ENCODE measurements at regions of chr3 and their contacts with region 1.

Region 1: DNA sequence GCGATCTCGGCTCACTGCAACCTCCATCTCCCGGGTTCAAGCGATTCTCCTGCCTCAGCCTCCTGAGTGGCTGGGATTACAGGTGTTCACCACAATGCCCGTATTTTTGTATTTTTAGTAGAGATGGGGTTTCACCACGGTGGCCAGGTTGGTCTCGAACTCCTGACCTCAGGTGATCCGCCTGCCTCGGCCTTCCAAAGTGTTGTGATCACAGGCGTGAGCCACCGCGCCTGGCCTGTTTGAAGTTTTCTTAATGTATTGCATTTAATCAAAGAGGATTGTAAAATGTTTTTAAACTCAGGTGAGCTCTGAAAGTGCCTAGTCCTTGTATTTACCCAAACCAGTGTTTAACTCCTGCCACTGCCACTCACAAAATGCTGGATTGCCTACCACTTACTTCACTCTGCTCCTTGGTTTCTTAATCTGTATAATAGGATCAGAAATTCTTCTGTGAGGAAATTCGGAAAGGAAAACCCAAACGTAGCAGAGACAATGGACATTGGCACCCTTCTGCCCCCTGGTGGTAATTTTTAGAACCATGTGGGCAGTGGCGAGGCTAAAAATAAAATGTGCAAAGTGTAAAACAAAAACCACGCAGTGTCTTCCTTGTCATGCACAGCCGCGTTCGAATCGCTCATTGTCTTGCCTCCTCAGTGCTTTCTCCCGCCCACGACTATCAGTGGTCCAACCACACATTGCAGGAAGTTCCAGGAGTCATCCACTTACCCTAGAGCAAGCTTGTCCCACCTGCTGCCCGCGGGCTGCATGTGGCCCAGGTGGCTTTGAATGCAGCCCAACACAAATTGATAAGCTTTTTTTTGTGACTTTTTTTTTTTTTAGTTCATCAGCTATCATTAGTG is 27.3 kb downstream of the CEP19 start:
- DNase-seq: peak; percentile 73
- H3K4me3 ChIP-seq: no peak overlapping the region
- H3K27ac ChIP-seq: no peak overlapping the region
- H3K4me1 ChIP-seq: peaks cover 5% of the 10 kb centered on the region
- H3K27me3 ChIP-seq: no peaks in the 10 kb centered on the region
- CTCF ChIP-seq: peak; percentile 92 to 94 (median 93)
- POLR2A ChIP-seq: no peak

Region 2: GRCh38 chr3:196611761-196612483 is 72.9 kb before region 1 on chr3:
- intact Hi-C with region 1: loop called (anchors 5 kb)
- DNase-seq: no peak
- H3K4me3 ChIP-seq: no peak overlapping the region
- H3K27ac ChIP-seq: no peak overlapping the region
- H3K4me1 ChIP-seq: peaks cover 10% of the 10 kb centered on the region
- H3K27me3 ChIP-seq: no peaks in the 10 kb centered on the region
- CTCF ChIP-seq: no peak
- POLR2A ChIP-seq: no peak

Region 3: DNA sequence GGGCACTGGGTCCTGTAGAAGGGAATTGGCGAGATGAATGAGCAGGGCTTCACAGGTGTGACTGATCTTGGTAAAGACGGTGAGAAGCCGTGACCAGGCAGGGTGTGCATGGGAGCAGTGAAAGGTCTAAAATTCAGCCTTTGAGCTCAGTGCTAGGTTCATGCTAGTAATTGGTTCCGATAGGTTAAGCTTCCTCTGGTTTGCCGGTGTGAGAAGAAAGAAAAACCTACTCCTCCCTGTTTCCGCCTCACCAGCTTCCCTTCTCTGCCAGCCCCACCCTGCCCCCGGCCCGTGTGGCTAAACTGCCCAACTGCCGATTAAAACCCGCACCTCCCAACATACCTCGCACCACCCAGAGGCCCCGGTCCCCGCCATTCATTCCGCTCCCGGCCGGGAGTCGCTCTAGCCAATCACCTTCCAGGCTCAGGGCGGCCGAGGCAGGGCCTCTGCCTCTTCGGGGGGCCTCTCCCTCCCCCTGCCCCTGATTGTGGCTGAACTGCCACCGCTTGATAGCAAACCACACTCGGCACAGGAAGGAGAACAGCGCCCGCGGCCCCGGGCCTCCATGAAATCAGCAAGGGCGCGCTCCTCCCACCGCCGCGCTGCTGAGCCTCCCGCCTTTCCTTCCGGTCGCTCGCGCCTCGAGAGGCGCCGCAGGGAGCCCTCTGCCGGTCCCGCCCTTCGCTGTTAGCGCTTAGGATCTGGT is 52.6 kb before region 1 on chr3:
- intact Hi-C with region 1: loop called (anchors 10 kb)
- DNase-seq: peak; percentile 89
- H3K4me3 ChIP-seq: peak overlapping the region; percentile 62 to 63
- H3K27ac ChIP-seq: peak overlapping the region; percentile 61 to 83
- H3K4me1 ChIP-seq: no peaks in the 10 kb centered on the region
- H3K27me3 ChIP-seq: no peaks in the 10 kb centered on the region
- CTCF ChIP-seq: no peak
- POLR2A ChIP-seq: no peak

Measured in testis (tissue), 5 donors.